A549 (cell line): ENCODE measurements at regions of chr9 and their contacts with region 1.

Region 1: DNA sequence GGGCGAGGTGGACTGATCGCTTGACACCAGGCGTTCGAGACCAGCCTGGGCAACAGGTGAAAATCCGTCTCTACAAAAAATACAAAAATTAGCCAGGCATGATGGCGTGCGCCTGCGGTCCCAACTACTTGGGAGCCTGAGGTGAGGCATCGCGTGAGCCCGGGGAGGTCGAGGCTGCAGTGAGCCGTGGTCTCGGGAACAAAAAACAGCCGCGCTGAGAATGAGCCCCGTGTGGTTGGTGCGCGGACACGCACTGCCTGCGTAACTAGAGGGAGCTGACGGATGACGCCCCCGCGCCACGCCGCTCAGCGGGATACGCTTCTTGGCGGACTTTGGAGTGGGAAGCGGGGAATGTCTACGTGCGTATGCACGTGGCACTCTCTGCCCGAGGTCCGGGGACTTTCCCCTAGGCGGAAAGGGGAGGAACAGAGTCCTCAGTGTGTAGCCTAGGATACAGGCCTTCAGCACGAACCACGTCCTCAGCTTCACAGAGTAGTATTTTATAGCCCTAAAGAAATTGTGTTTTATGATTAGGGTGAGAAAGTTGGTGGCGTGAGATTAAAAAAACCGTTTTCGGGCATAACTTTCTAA is at the start of gene RMRP:
- DNase-seq: peak; percentile 98 to 100
- ATAC-seq: peak; percentile 89 to 95
- H3K4me3 ChIP-seq: peak within 1 kb of the TSS; percentile 68
- H3K27ac ChIP-seq: peak within 1 kb of the TSS; percentile 93 to 98
- H3K4me1 ChIP-seq: peaks cover 26% of the 10 kb centered on the region
- CTCF ChIP-seq: no peak
- EP300 ChIP-seq: no peak
- POLR2A ChIP-seq: no peak
- RAD21 ChIP-seq: peak in 1 of 2 experiments; percentile 34; a peak in 4 of 5 replicates
- polyA plus RNA-seq, gene RMRP: 80.2 and 257 TPM in 2 replicates

Region 2: GRCh38 chr9:35508069-35508468 is 149.6 kb before region 1 on chr9:
- CTCF ChIA-PET with region 1: no interaction called
- POLR2A ChIA-PET with region 1: no interaction called
- DNase-seq: no peak
- ATAC-seq: no peak
- H3K4me3 ChIP-seq: no peak overlapping the region
- H3K27ac ChIP-seq: peak overlapping the region; percentile 95 to 96; a peak in 5 of 6 replicates
- H3K4me1 ChIP-seq: peaks cover 50% of the 10 kb centered on the region
- CTCF ChIP-seq: no peak
- EP300 ChIP-seq: no peak
- POLR2A ChIP-seq: no peak
- RAD21 ChIP-seq: no peak

Region 3: DNA sequence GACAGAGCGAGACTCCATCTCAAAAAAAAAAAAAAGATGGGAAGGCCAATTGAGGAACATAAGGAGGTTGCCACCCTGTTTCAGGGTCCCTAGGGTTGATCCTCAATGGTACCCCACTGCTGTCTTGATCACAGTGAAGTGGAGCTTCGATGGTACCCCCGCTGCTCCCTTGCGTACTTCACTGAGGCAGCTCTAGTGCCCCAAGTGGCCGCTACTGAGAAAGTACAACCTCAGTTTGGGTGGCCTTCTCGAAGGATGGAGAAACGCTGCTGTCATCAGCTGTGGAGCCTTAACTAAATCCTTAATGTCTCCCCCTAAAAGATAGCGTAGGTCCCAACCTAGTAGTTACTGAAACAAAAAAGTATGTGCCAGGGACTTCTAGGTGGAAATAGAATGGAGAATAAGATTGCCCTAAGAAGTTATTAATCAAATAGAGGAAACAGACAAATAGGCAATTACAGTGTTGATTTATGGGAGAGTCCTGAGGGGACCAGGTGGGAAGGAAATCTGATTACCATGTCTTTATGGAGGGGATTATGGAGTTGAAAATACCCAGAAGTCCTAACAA is 46.3 kb before region 1 on chr9:
- CTCF ChIA-PET with region 1: interaction called, 15 read pairs
- POLR2A ChIA-PET with region 1: no interaction called
- DNase-seq: peak; percentile 53 to 64
- ATAC-seq: peak; percentile 74 to 87
- H3K4me3 ChIP-seq: no peak overlapping the region
- H3K27ac ChIP-seq: no peak overlapping the region
- H3K4me1 ChIP-seq: peaks cover 8% of the 10 kb centered on the region
- CTCF ChIP-seq: peak; percentile 61
- EP300 ChIP-seq: no peak
- POLR2A ChIP-seq: no peak
- RAD21 ChIP-seq: peak in 1 of 2 experiments; percentile 35; a peak in 1 of 5 replicates

Region 4: GRCh38 chr9:35675732-35676392 is 18.2 kb after region 1 on chr9:
- CTCF ChIA-PET with region 1: interaction called, 131 read pairs
- POLR2A ChIA-PET with region 1: interaction called, 4 read pairs
- DNase-seq: no peak
- ATAC-seq: no peak
- H3K4me3 ChIP-seq: no peak overlapping the region
- H3K27ac ChIP-seq: 0 out of 6 replicates have a peak overlapping the region, but pooled peaks of 1 of the 2 experiments have one; percentile 10
- H3K4me1 ChIP-seq: peaks cover 21% of the 10 kb centered on the region
- CTCF ChIP-seq: no peak
- EP300 ChIP-seq: no peak
- POLR2A ChIP-seq: no peak
- RAD21 ChIP-seq: no peak

Region 5: DNA sequence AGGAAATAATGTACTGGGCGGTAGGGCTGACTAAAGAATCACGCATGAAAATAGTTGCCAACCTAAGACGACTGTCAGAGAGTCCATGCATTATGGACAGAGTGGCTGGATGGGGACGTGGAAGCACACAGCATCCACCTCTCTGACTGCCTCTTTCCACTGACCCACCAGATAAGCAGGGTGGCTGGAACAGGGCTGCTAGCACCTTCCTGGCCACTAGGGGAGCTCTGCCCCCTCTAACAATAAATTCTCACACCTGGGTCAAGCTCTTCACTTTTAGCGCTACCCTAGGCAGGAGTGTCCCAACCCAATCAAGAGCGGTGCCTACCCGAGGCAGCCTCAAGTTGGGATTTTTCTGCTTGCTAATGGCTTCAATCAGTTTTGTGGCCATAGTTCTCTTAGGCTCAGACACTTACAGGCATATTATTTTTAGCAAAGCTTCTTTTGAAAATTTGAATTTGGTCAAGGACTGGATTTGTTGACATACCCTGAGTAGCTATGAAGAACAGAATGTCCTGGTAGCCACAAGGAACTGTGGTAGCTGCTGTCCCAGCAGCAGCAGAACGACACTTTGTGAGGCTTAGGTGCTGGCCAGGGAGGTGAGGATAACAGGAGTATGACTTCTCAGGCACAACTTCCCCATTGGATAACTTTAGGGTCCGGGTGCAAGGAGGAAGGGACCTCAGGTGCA is 39.0 kb after region 1 on chr9:
- CTCF ChIA-PET with region 1: interaction called, 498 read pairs
- POLR2A ChIA-PET with region 1: interaction called, 23 read pairs
- DNase-seq: peak; percentile 66 to 80
- ATAC-seq: peak; percentile 79 to 88
- H3K4me3 ChIP-seq: no peak overlapping the region
- H3K27ac ChIP-seq: peak overlapping the region; percentile 1 to 43; a peak in 1 of 6 replicates
- H3K4me1 ChIP-seq: peaks cover 16% of the 10 kb centered on the region
- CTCF ChIP-seq: peak; percentile 74
- EP300 ChIP-seq: no peak
- POLR2A ChIP-seq: no peak
- RAD21 ChIP-seq: peak; percentile 41 to 60

Region 6: DNA sequence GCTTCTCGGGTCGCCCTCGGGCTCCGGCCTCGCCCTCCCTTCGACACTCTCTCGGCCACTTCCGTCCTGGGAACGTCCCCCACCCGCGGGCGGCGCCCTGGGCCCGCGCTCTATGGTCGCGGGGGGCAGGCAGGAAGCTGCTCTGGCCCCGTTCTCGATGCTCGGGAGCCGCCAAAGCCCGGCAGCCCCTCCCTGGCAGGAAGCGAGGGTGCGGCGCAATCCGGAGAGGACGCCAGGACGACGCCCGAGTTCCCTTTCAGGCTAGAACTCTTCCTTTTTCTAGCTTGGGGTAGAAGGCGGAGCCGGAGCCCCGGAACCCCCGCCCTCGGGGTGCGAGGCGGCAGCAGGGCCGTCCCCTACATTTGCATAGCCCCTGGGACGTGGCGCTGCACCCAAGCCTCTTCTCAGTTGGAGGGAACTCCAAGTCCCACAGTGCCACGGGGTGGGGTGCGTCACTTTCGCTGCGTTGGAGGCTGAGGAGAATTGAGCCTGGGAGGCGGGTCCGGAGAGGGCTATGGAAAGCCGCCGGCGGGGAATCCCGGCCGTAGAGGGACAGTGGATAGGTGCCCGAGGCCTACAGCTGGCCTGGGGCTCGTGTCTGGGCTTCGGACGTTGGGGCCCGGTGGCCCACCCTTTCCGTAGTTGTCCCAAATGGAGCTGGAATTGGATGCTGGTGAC is 74.6 kb after region 1 on chr9 and contains the starts of genes CREB3 and TLN1:
- CTCF ChIA-PET with region 1: interaction called, 243 read pairs
- POLR2A ChIA-PET with region 1: interaction called, 38 read pairs
- DNase-seq: peak; percentile 98 to 99
- ATAC-seq: peak; percentile 82 to 93
- H3K4me3 ChIP-seq: peak within 1 kb of the TSS; percentile 87
- H3K27ac ChIP-seq: peak within 1 kb of the TSS; percentile 95 to 96
- H3K4me1 ChIP-seq: peaks cover 52% of the 10 kb centered on the region
- CTCF ChIP-seq: peak; percentile 40
- EP300 ChIP-seq: no peak
- POLR2A ChIP-seq: peak; percentile 64
- RAD21 ChIP-seq: peak in 1 of 2 experiments; percentile 36; a peak in 2 of 5 replicates
- polyA plus RNA-seq, gene CREB3: 33.3 and 36.0 TPM in 2 replicates
- polyA plus RNA-seq, gene TLN1: 65.5 and 72.1 TPM in 2 replicates